ENCODE measurements at regions of chr18 and their contacts with region 1.

Region 1: DNA sequence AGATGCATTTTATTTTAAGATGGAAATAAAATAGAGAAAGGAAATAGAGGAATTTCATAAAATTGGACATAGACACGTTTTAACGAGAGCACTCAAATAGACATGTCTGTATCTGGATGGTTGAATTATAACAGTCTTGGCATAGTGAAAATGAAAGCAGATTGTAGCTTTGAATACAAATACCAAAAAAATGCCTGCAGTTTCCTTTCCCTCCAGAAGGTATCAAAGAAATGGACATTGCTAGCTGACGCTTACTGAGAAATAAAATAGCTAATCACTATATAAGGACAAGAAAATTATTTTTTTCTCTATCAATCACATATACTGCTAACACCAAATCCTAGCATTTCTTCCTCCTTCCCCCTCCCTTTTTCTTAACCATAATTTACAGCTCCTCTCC is 11.4 kb upstream of the MAPRE2 start:
- DNase-seq: peak in 3 of 14 experiments; percentile 65 to 80 (median 66)
- ATAC-seq: peak; percentile 39
- H3K4me3 ChIP-seq: peak overlapping the region; percentile 51
- H3K4me3 Mint-ChIP-seq: peak overlapping the region; percentile 82
- H3K27ac ChIP-seq: peak overlapping the region; percentile 80 to 89
- H3K27ac Mint-ChIP-seq: peak overlapping the region; percentile 98
- H3K4me1 ChIP-seq: peaks cover 34% of the 10 kb centered on the region
- H3K4me1 Mint-ChIP-seq: peaks cover 70% of the 10 kb centered on the region
- H3K27me3 ChIP-seq: no peaks in the 10 kb centered on the region
- H3K27me3 Mint-ChIP-seq: no peaks in the 10 kb centered on the region
- CTCF ChIP-seq: peak; percentile 16

Region 2: GRCh38 chr18:35040988-35041814 is 11.4 kb after region 1 on chr18 and contains the start of gene MAPRE2:
- CTCF ChIA-PET with region 1: interaction called, 29 read pairs
- POLR2A ChIA-PET with region 1: interaction called, 203 read pairs
- intact Hi-C with region 1: loop called in 1 of 2 experiments (anchors 1 kb)
- DNase-seq: peak; percentile 98 to 100 (median 99)
- ATAC-seq: peak; percentile 76
- H3K4me3 ChIP-seq: peak within 1 kb of the TSS; percentile 94
- H3K4me3 Mint-ChIP-seq: peak within 1 kb of the TSS; percentile 90
- H3K27ac ChIP-seq: peak within 1 kb of the TSS; percentile 89 to 91
- H3K27ac Mint-ChIP-seq: peak within 1 kb of the TSS; percentile 95
- H3K4me1 ChIP-seq: peaks cover 27% of the 10 kb centered on the region
- H3K4me1 Mint-ChIP-seq: peaks cover 58% of the 10 kb centered on the region
- H3K27me3 ChIP-seq: no peaks in the 10 kb centered on the region
- H3K27me3 Mint-ChIP-seq: no peaks in the 10 kb centered on the region
- CTCF ChIP-seq: no peak
- total RNA-seq, gene MAPRE2: 108 to 112 TPM

Region 3: GRCh38 chr18:35106845-35107148 is 77.0 kb after region 1 on chr18:
- CTCF ChIA-PET with region 1: interaction called, 10 read pairs
- POLR2A ChIA-PET with region 1: interaction called, 4 read pairs
- intact Hi-C with region 1: loop called in 1 of 2 experiments (anchors 5 kb)
- DNase-seq: peak in 3 of 14 experiments; percentile 43 to 52 (median 44)
- ATAC-seq: peak; percentile 72
- H3K4me3 ChIP-seq: no peak overlapping the region
- H3K4me3 Mint-ChIP-seq: peak overlapping the region; percentile 30
- H3K27ac ChIP-seq: peak overlapping the region in 1 of 2 donors; percentile 18
- H3K27ac Mint-ChIP-seq: peak overlapping the region; percentile 74
- H3K4me1 ChIP-seq: no peaks in the 10 kb centered on the region
- H3K4me1 Mint-ChIP-seq: peaks cover 10% of the 10 kb centered on the region
- H3K27me3 ChIP-seq: no peaks in the 10 kb centered on the region
- H3K27me3 Mint-ChIP-seq: no peaks in the 10 kb centered on the region
- CTCF ChIP-seq: no peak

Region 4: GRCh38 chr18:35231052-35231451 is 201.3 kb after region 1 on chr18:
- CTCF ChIA-PET with region 1: interaction called, 4 read pairs
- POLR2A ChIA-PET with region 1: no interaction called
- intact Hi-C with region 1: loop called (anchors 1 to 5 kb)
- DNase-seq: peak; percentile 66 to 91 (median 74)
- ATAC-seq: peak; percentile 97
- H3K4me3 ChIP-seq: no peak overlapping the region
- H3K4me3 Mint-ChIP-seq: no peak overlapping the region
- H3K27ac ChIP-seq: no peak overlapping the region
- H3K27ac Mint-ChIP-seq: no peak overlapping the region
- H3K4me1 ChIP-seq: no peaks in the 10 kb centered on the region
- H3K4me1 Mint-ChIP-seq: peaks cover 4% of the 10 kb centered on the region
- H3K27me3 ChIP-seq: no peaks in the 10 kb centered on the region
- H3K27me3 Mint-ChIP-seq: no peaks in the 10 kb centered on the region
- CTCF ChIP-seq: peak; percentile 90

Region 5: DNA sequence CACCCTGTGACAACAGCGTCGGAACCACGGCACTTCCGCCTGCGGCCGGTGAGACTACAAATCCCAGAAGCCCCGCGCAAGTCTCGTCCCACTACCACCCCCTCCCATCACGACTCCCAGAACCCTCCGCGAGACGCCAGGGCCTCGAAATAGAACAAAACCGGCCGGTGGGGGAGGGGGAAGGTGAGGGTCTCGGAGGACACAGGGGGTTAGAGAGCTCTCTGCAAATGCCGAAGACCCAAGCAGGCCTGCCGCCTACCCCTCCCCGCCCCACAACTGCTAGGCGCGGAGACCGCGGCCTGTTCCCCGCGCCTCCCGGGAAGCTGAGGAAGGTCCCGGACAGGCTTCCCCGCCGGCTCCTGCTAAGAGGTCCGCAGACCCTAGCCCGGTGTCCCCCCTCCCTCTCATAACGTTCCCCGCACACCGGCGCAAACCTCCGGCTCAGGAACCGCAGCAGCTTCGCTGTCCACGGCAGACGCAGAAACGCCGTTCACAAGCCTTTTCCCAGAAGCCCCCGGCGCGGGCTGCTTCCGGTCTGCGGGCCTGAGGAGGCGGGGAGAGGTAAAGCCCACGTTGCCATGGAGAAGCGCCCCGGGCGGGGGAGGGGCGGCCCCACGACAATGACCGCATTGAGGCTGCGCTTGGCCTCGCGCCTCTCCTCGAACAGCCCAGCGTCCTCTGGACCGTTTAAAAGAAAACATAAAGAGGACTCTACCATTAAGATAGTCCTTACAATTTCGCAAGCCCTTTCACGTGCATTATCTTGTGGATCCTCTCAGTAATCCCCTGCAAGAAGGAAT is 314.4 kb after region 1 on chr18 and contains the start of gene ZNF24:
- CTCF ChIA-PET with region 1: interaction called, 4 read pairs
- POLR2A ChIA-PET with region 1: interaction called, 12 read pairs
- intact Hi-C with region 1: no loop called
- DNase-seq: peak; percentile 83 to 95 (median 88)
- ATAC-seq: peak; percentile 92
- H3K4me3 ChIP-seq: peak within 1 kb of the TSS; percentile 96
- H3K4me3 Mint-ChIP-seq: peak within 1 kb of the TSS; percentile 97
- H3K27ac ChIP-seq: peak within 1 kb of the TSS; percentile 99
- H3K27ac Mint-ChIP-seq: peak within 1 kb of the TSS; percentile 97
- H3K4me1 ChIP-seq: peaks cover 27% of the 10 kb centered on the region
- H3K4me1 Mint-ChIP-seq: peaks cover 55% of the 10 kb centered on the region
- H3K27me3 ChIP-seq: no peaks in the 10 kb centered on the region
- H3K27me3 Mint-ChIP-seq: no peaks in the 10 kb centered on the region
- CTCF ChIP-seq: no peak
- total RNA-seq, gene ZNF24: 65.9 to 68.3 TPM

Region 6: DNA sequence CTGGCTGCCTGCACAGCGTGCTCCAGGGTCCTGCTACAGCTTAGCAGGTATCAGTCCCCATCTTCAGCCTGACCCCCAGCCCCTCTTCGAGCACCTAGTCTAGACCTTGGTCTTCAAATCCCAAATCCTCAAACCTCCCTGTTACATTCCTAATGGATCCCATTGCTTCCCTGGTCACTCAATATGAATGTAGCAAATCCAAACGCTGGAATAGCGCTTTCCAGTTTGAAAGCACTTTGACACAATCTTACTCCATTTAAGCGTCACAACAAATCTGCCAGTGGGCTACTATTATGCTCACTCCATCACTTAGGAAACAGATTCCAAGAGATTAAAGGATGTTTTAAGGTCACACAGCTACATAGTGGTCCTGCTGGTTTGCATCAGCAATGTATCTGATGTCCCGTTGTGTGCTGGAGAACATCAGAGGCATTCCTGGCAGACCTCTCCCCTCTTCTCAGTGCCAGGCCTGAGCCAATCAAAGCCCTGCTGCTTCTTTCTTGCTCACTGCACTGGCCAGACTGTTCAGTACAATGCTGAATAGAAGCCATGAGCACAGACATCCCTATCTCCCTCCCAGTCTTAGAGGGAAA is 479.1 kb after region 1 on chr18:
- CTCF ChIA-PET with region 1: no interaction called
- POLR2A ChIA-PET with region 1: no interaction called
- intact Hi-C with region 1: no loop called
- DNase-seq: no peak
- ATAC-seq: no peak
- H3K4me3 ChIP-seq: no peak overlapping the region
- H3K4me3 Mint-ChIP-seq: no peak overlapping the region
- H3K27ac ChIP-seq: no peak overlapping the region
- H3K27ac Mint-ChIP-seq: no peak overlapping the region
- H3K4me1 ChIP-seq: no peaks in the 10 kb centered on the region
- H3K4me1 Mint-ChIP-seq: no peaks in the 10 kb centered on the region
- H3K27me3 ChIP-seq: no peaks in the 10 kb centered on the region
- H3K27me3 Mint-ChIP-seq: no peaks in the 10 kb centered on the region
- CTCF ChIP-seq: no peak